Posterior vena cava (tissue), 2 donors: ENCODE measurements at regions of chr3 and their contacts with region 1.

Region 1: DNA sequence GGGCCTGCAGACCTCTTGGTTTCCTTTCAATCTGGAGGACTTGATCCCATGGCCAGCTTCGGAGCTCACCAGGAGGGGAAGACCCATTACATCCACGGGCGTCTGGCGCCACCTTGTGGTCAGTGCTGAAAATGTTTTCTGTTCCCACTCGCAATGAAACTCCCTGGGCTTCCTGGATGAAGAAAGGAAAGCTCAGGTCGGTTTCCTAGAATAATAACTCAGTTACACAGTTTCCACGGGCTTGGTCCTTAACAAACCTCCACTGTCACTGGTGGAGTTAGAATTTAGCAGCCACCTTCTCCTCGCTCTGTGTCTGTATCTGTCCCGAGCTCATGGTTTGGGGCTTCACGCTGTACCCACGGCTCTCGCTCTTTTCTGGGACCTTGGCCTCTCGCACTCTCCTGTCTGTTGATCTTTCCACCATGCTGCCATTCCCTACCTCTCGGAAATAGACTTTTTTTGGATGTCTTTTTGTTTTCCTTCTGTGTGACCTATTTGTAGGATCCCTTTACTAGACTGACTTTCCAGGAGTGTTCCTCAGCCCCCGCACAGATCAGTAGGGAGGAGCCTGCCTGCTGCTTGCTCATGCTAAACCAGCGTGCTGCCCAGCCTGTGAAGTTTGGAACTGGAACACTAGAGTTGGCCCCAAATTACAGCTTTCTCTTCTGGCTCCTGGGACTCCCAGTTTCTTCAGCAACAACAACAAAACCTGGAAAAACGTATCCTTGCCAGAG is 56.3 kb downstream of the IL20RB start:
- DNase-seq: peak; percentile 96

Region 2: GRCh38 chr3:136075218-136075808 is 938.8 kb before region 1 on chr3:
- intact Hi-C with region 1: loop called in 1 of 2 experiments (anchors 5 kb)
- DNase-seq: no peak